ENCODE measurements at regions of chr1 and their contacts with region 1.

Region 1: GRCh38 chr1:89843281-89844121 is 22.7 kb downstream of the LRRC8D start:
- DNase-seq: peak; percentile 89
- H3K4me3 Mint-ChIP-seq: peak overlapping the region; percentile 93
- H3K27ac Mint-ChIP-seq: peak overlapping the region; percentile 92
- H3K4me1 Mint-ChIP-seq: peaks cover 51% of the 10 kb centered on the region
- H3K27me3 Mint-ChIP-seq: no peaks in the 10 kb centered on the region

Region 2: DNA sequence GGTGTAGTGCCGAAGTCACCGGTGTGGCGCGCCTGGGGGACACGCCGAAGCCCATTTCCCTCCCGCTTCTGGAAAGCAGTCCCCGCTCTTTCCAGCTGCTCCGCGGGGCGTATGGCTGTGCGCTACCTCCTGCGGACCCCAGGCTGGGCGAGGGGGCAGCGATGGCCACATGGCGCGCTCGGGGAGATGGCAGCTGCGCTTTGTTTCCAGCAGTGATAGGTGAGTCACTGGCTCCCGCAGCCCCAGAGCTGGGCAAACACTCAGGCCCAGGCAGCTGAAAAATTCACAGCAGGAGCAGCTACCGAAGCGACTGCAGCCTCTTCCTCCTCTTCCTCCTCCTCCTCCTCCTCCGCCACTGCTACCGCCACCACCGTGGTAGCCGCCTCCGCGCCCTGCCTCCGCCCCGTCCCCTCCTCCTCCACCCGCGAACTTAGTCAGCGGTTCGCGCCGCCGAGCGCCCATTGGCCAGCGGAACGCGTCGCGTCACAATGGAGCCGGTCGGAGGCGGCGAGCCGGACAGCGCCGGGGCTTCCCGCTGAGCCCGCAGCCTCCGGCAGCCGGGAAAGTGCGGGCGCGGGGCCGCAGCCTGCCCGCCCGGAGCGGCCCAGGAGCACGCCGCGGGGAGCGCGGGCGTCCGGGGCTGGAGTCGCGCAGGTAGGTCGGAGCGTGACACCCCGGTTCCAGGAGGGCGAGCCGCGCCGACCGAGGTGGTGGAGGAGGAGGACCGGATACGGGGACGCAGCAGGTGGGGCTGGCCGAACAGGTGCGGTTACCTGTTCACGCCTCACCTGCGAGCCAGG is 318.9 kb before region 1 on chr1 and contains the start of gene LRRC8B:
- CTCF ChIA-PET with region 1: no interaction called
- POLR2A ChIA-PET with region 1: no interaction called
- intact Hi-C with region 1: loop called (anchors 5 kb)
- DNase-seq: peak; percentile 93
- H3K4me3 Mint-ChIP-seq: no peak within 1 kb of the TSS
- H3K27ac Mint-ChIP-seq: no peak within 1 kb of the TSS
- H3K4me1 Mint-ChIP-seq: peaks cover 31% of the 10 kb centered on the region
- H3K27me3 Mint-ChIP-seq: no peaks in the 10 kb centered on the region
- total RNA-seq, gene LRRC8B: 41.1 to 42.1 TPM

Region 3: GRCh38 chr1:89780721-89781120 is 62.8 kb before region 1 on chr1:
- CTCF ChIA-PET with region 1: interaction called, 4 read pairs
- POLR2A ChIA-PET with region 1: interaction called, 15 read pairs
- intact Hi-C with region 1: loop called (anchors 1 kb)
- DNase-seq: peak; percentile 58
- H3K4me3 Mint-ChIP-seq: peak overlapping the region; percentile 48
- H3K27ac Mint-ChIP-seq: peak overlapping the region; percentile 90
- H3K4me1 Mint-ChIP-seq: peaks cover 43% of the 10 kb centered on the region
- H3K27me3 Mint-ChIP-seq: no peaks in the 10 kb centered on the region

Region 4: DNA sequence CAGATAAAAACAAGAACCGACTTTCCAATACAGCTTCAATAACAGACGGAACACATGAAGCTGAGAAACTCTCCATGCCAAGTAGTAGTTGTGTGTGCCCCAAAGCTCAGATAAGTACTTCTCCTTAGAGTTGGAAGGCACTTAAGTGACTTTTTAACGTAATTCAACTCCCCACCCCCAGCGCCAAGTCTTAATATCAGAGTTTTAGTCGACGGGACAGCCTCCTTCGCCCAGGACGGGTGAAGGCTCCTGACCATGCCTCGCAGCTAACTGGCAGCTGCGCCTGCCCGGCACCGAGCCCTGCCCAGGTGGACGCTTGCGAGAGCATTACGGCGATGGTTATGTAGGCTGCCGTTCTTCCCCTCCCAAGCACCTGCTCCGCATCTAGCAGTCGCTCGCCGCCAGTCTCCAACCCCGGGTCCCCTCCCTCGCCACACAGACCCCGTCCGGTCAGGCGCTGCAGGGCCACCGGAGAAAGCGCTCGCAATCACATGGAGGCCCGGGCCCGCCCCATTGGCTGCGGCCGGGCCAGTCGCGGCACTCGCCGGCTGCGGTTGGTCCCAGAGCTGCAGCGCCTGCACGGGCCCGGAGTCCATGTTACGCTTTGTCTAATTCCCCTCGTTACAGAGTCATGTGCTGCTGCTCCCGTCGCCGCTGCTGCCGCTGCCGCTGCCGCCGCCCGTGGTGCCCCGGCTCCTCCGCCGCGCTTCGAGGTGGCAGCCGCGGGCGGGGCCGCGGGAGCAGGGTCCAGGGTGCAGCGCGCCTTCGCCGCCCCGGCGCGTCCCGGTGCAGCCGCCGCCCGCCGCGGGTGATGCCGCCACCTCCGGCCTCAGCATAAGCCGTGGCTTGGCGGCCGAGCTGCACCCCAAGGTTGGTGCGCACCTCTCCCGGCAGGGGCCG is 22.8 kb before region 1 on chr1 and contains the start of gene LRRC8D:
- CTCF ChIA-PET with region 1: interaction called, 16 read pairs
- POLR2A ChIA-PET with region 1: interaction called, 20 read pairs
- intact Hi-C with region 1: loop called (anchors 1 kb)
- DNase-seq: peak; percentile 86
- H3K4me3 Mint-ChIP-seq: peak within 1 kb of the TSS; percentile 85
- H3K27ac Mint-ChIP-seq: peak within 1 kb of the TSS; percentile 55
- H3K4me1 Mint-ChIP-seq: peaks cover 26% of the 10 kb centered on the region
- H3K27me3 Mint-ChIP-seq: no peaks in the 10 kb centered on the region
- total RNA-seq, gene LRRC8D: 17.7 to 19.4 TPM

Region 5: DNA sequence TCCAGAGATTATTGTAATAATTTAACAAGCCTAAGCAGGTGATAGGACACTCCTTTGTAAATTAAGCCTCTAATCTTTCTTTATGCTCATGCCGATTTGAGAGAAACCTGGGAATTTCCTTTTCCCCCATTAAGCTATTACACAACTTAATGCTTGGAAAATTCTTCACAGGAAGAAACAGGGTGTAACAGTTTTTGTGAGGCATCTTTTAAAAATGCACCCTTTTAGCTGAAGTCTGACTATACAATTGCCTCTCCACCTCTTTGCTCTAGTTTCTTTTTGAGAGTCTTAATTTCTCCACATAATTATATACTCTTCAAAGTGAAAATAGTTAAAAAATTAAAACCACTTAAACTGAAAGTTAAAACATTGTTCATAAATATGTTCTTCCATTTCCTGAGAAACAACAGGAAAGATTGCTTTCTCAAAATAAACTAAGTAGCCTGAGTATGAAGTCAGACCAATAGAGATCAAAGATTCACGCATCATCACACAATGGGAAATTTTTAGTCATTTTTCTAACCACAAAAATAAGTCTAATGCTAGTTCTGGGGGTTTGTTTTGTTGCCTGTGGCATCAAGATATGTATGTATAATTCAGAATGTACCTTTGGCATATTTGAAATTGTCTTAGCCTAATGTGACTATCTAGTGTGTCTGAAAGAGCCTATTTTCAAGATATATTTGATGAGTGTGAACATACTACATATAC is 12.1 kb after region 1 on chr1:
- CTCF ChIA-PET with region 1: interaction called, 11 read pairs
- POLR2A ChIA-PET with region 1: interaction called, 4 read pairs
- intact Hi-C with region 1: loop called (anchors 1 kb)
- DNase-seq: no peak
- H3K4me3 Mint-ChIP-seq: no peak overlapping the region
- H3K27ac Mint-ChIP-seq: no peak overlapping the region
- H3K4me1 Mint-ChIP-seq: peaks cover 18% of the 10 kb centered on the region
- H3K27me3 Mint-ChIP-seq: no peaks in the 10 kb centered on the region

Region 6: DNA sequence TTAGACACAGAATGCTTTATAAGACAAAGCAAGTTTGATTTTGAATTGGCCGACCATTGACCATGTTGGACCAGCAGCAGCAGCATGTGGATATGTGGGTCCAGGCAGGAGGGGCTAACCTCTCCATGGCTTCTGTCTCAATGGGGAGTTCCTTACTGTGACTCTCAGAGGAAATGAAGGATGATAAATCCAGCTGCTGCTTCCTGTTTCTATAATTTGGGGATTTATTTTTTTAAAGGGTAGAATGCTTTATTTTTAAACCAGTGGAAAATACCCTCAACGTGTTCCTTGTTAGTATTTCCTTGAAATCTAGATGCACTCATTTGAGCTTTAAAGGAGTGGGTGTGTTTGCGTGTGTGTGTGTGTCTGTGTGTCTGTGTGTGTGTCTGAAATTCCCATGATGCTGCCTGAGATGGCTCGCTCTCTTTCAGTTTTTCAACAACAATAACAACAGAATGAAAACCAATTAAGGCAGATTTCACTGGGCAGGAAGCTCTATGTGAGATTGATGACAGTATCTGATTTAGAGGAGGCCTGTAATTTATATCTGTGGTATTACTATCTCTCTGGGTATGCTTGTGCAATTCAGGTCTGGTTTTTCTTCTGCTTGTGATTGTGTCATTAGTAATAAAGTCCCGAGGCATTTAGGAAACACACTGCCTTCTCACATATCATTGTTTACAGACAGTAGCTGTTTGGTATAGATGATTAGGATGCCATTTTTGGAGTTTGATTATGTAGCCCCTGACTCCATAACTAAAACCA is 65.4 kb after region 1 on chr1:
- CTCF ChIA-PET with region 1: interaction called, 6 read pairs
- POLR2A ChIA-PET with region 1: interaction called, 3 read pairs
- intact Hi-C with region 1: loop called (anchors 1 kb)
- DNase-seq: no peak
- H3K4me3 Mint-ChIP-seq: no peak overlapping the region
- H3K27ac Mint-ChIP-seq: peak overlapping the region; percentile 47
- H3K4me1 Mint-ChIP-seq: peaks cover 49% of the 10 kb centered on the region
- H3K27me3 Mint-ChIP-seq: no peaks in the 10 kb centered on the region

Region 7: GRCh38 chr1:89987170-89987819 is 143.8 kb after region 1 on chr1:
- CTCF ChIA-PET with region 1: interaction called, 16 read pairs
- POLR2A ChIA-PET with region 1: no interaction called
- intact Hi-C with region 1: loop called (anchors 1 kb)
- DNase-seq: peak; percentile 50
- H3K4me3 Mint-ChIP-seq: no peak overlapping the region
- H3K27ac Mint-ChIP-seq: no peak overlapping the region
- H3K4me1 Mint-ChIP-seq: no peaks in the 10 kb centered on the region
- H3K27me3 Mint-ChIP-seq: no peaks in the 10 kb centered on the region